Dendritic cell treated with granulocyte-macrophage colony-stimulating factor and Interleukin-4, amounts not matched to agents 40 ng/mL and 50 ng/mL, for 4 days (primary cell): ENCODE measurements at regions of chr2 and their contacts with region 1.

Region 1: GRCh38 chr2:33475224-33476130 is 972 bp upstream of the RASGRP3 start:
- H3K4me3 Mint-ChIP-seq: peak overlapping the region; percentile 80
- H3K27ac Mint-ChIP-seq: peak overlapping the region; percentile 95
- H3K4me1 Mint-ChIP-seq: peaks cover 29% of the 10 kb centered on the region
- H3K27me3 Mint-ChIP-seq: no peaks in the 10 kb centered on the region

Region 2: GRCh38 chr2:33497221-33497650 is 21.8 kb after region 1 on chr2:
- intact Hi-C with region 1: loop called (anchors 2 kb)
- H3K4me3 Mint-ChIP-seq: no peak overlapping the region
- H3K27ac Mint-ChIP-seq: no peak overlapping the region
- H3K4me1 Mint-ChIP-seq: peaks cover 55% of the 10 kb centered on the region
- H3K27me3 Mint-ChIP-seq: no peaks in the 10 kb centered on the region

Region 3: DNA sequence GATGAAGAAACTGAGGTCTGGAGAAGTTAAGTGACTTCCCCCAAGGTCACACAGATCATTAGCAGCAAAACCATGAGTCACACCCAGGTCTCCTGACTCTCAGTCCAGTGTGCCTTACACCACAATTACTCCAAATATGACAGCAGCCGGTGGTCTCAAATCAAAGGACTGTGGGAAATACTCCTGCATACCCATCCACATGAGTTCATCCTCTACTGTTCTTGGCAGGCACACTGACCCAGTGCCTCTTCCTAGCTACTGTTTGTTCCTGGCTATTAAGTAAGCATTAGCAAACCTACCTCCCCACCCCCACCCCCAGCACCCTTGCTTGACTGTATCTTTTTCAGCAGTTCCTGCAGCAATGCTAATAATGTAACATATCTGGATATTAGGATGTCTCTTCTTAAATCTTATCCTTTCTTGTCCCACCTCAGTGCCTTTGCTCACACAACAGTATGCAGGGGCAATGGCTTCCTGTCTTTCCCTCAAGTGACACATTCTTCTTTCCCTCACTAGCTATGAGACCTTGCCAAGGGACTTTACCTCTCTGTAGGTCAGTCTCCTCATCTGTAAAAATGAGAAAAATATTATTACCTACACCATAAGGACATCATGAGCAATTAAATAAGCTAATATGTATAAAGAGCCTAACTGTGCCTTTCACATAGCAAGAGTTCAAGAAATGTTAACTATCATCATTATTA is 77.4 kb after region 1 on chr2:
- intact Hi-C with region 1: loop called (anchors 2 kb)
- H3K4me3 Mint-ChIP-seq: no peak overlapping the region
- H3K27ac Mint-ChIP-seq: peak overlapping the region; percentile 81
- H3K4me1 Mint-ChIP-seq: peaks cover 45% of the 10 kb centered on the region
- H3K27me3 Mint-ChIP-seq: no peaks in the 10 kb centered on the region

Region 4: GRCh38 chr2:33681369-33681757 is 205.9 kb after region 1 on chr2:
- intact Hi-C with region 1: no loop called
- H3K4me3 Mint-ChIP-seq: no peak overlapping the region
- H3K27ac Mint-ChIP-seq: no peak overlapping the region
- H3K4me1 Mint-ChIP-seq: no peaks in the 10 kb centered on the region
- H3K27me3 Mint-ChIP-seq: no peaks in the 10 kb centered on the region